Heart right ventricle (tissue), 16 donors: ENCODE measurements at regions of chrX and their contacts with region 1.

Region 1: GRCh38 chrX:18886344-18887161 is 97.4 kb downstream of the PHKA2 start:
- DNase-seq: peak; percentile 69 to 79
- ATAC-seq: peak; percentile 75 to 90 (median 80)
- H3K4me3 ChIP-seq: peak overlapping the region in 9 of 10 donors; percentile 12 to 55 (median 47)
- H3K27ac ChIP-seq: peak overlapping the region; percentile 81 to 91 (median 88)
- H3K4me1 ChIP-seq: peaks cover 0 to 29% (median 24%) of the 10 kb centered on the region in 9 donors
- H3K27me3 ChIP-seq: no peaks in the 10 kb centered on the region
- CTCF ChIP-seq: peak; percentile 20 to 69 (median 49)

Region 2: GRCh38 chrX:18410043-18410442 is 476.5 kb before region 1 on chrX:
- intact Hi-C with region 1: loop called in 2 of 10 experiments (anchors 5 to 10 kb)
- DNase-seq: no peak
- ATAC-seq: peak in 1 of 8 donors; percentile 28
- H3K4me3 ChIP-seq: no peak overlapping the region
- H3K27ac ChIP-seq: no peak overlapping the region
- H3K4me1 ChIP-seq: no peaks in the 10 kb centered on the region
- H3K27me3 ChIP-seq: peaks cover 0 to 5% (median 0%) of the 10 kb centered on the region in 7 donors
- CTCF ChIP-seq: peak in 6 of 9 donors; percentile 23 to 48 (median 46)

Region 3: GRCh38 chrX:18674788-18675735 is 211.5 kb before region 1 on chrX:
- intact Hi-C with region 1: loop called in 5 of 10 experiments (anchors 2 to 10 kb)
- DNase-seq: peak; percentile 75 to 77
- ATAC-seq: peak; percentile 92 to 98 (median 96)
- H3K4me3 ChIP-seq: peak overlapping the region; percentile 43 to 81 (median 72)
- H3K27ac ChIP-seq: peak overlapping the region; percentile 64 to 95 (median 84)
- H3K4me1 ChIP-seq: peaks cover 0 to 7% (median 0%) of the 10 kb centered on the region in 9 donors
- H3K27me3 ChIP-seq: peaks cover 0 to 11% (median 0%) of the 10 kb centered on the region in 7 donors
- CTCF ChIP-seq: no peak

Region 4: GRCh38 chrX:18984381-18985185 is 98.0 kb after region 1 on chrX:
- intact Hi-C with region 1: loop called in 1 of 10 experiments (anchors 5 kb)
- DNase-seq: peak; percentile 76 to 82
- ATAC-seq: peak; percentile 93 to 98 (median 96)
- H3K4me3 ChIP-seq: peak overlapping the region; percentile 56 to 94 (median 76)
- H3K27ac ChIP-seq: peak overlapping the region; percentile 75 to 97 (median 92)
- H3K4me1 ChIP-seq: peaks cover 0 to 22% (median 4%) of the 10 kb centered on the region in 9 donors
- H3K27me3 ChIP-seq: peaks cover 0 to 27% (median 0%) of the 10 kb centered on the region in 7 donors
- CTCF ChIP-seq: peak; percentile 25 to 63 (median 51)